Activated CD8-positive, alpha-beta T cell treated with anti-CD3 and anti-CD28 coated beads for 36 hours (primary cell): ENCODE measurements at regions of chr6 and their contacts with region 1.

Region 1: DNA sequence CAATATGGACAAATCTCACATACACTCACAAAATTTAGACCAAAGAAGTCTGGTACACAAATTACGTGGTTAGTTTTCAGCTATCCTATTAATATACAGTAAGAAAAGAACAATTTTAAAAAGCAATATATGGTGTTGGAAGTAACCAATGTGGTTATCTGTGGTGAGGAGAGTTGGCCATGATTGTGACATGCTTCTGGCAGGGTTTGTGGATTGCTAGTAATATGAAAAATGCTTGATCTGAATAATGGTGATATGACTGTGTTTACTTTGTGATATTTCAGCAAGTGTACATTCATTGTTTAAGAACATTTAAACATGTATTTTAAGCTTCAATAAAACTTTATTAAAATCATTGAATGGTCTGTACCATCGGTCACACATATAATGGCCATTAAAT is 99.1 kb downstream of the ADGB start:
- DNase-seq: no peak
- ATAC-seq: no peak
- H3K4me3 Mint-ChIP-seq: no peak overlapping the region
- H3K27ac Mint-ChIP-seq: no peak overlapping the region
- H3K4me1 Mint-ChIP-seq: no peaks in the 10 kb centered on the region
- H3K27me3 Mint-ChIP-seq: peaks cover 3% of the 10 kb centered on the region
- CTCF ChIP-seq: no peak

Region 2: DNA sequence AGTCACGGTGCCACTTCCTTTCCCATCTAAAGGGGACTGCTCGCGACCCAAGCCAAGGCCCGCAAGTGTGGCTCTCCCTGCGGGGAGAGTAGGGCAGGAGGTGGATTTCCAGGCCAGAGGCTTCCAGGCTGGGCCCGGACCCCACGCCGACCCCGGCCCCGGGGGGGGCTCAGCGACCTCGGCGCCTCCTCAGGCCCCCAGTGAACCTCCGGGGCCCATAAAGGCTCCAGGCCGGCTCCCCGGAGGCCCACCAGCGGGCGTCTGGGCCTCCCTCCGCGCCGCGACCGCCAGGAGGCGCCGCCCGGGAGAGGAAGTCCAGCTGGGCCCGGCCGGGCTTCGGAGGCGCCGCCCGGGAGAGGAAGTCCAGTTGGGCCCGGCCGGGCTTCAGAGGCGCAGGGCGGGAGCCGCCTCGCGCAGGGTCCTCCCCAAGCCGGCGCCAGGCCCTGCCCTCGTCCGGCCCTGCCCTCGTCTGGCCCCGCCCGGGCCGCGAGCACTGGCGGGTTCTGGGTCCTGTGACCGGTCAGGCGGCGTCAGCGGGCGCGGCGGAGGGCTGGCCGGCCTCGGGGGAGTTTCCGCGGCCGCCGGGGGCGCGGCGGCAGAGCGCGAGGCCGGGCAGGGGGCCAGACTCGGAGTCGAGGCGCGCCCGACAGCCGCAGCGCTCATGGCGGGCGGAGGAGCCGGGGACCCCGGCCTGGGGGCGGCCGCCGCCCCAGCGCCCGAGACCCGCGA is 154.5 kb before region 1 on chr6 and contains the start of gene RAB32:
- CTCF ChIA-PET with region 1: interaction called, 3 read pairs
- POLR2A ChIA-PET with region 1: no interaction called
- intact Hi-C with region 1: loop called (anchors 10 kb)
- DNase-seq: peak; percentile 12
- ATAC-seq: peak; percentile 73
- H3K4me3 Mint-ChIP-seq: peak within 1 kb of the TSS; percentile 57
- H3K27ac Mint-ChIP-seq: no peak within 1 kb of the TSS
- H3K4me1 Mint-ChIP-seq: peaks cover 8% of the 10 kb centered on the region
- H3K27me3 Mint-ChIP-seq: peaks cover 37% of the 10 kb centered on the region
- CTCF ChIP-seq: peak; percentile 45
- total RNA-seq, gene RAB32: 0.36 TPM in 1 of 2 experiments, not detected in the other